Left ventricle myocardium inferior (tissue), 1 donor: ENCODE measurements at regions of chr6 and their contacts with region 1.

Region 1: DNA sequence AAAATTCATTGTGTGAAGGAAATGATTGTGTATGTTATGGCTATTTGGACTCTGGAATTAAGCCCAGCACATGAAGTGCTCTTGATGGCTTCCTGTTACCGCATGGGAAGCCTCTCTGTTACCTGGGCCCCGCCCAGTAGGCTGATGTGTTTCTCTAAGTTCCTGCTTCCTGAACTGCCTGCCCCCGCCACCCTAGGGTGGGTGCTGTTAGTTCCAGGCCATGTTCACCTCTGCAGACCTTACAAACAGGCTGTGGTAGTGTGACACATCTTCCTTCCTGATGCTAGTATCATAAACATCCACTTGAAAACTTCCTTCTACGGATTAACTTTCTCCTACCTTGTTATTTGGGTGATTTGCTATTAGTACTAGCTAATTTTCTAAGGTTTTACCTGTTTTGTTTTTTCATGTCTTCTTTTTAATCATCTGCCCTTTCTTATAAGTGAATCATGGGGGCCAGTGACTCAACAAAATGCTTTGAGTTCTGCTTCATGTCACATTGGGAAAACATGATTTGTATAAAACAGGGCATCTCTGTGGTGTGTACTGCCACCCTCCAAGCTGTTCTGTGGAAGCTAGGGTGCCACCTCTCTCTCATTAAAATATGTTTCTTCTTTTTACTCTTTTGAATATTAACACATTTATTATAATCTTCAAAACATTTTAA is 40.6 kb downstream of the SH3BGRL2 start:
- DNase-seq: peak; percentile 42
- H3K4me3 ChIP-seq: no peak overlapping the region
- H3K27ac ChIP-seq: peak overlapping the region; percentile 75
- H3K4me1 ChIP-seq: peaks cover 46% of the 10 kb centered on the region
- H3K27me3 ChIP-seq: no peaks in the 10 kb centered on the region
- CTCF ChIP-seq: no peak

Region 2: GRCh38 chr6:79630883-79631692 is 40.6 kb before region 1 on chr6 and contains the start of gene SH3BGRL2:
- intact Hi-C with region 1: loop called (anchors 2 kb)
- DNase-seq: peak; percentile 74
- H3K4me3 ChIP-seq: peak within 1 kb of the TSS; percentile 87
- H3K27ac ChIP-seq: peak within 1 kb of the TSS; percentile 81
- H3K4me1 ChIP-seq: peaks cover 36% of the 10 kb centered on the region
- H3K27me3 ChIP-seq: no peaks in the 10 kb centered on the region
- CTCF ChIP-seq: no peak
- total RNA-seq, gene SH3BGRL2: 5.8 TPM